Mammary epithelial cell (primary cell): ENCODE measurements at regions of chr9 and their contacts with region 1.

Region 1: DNA sequence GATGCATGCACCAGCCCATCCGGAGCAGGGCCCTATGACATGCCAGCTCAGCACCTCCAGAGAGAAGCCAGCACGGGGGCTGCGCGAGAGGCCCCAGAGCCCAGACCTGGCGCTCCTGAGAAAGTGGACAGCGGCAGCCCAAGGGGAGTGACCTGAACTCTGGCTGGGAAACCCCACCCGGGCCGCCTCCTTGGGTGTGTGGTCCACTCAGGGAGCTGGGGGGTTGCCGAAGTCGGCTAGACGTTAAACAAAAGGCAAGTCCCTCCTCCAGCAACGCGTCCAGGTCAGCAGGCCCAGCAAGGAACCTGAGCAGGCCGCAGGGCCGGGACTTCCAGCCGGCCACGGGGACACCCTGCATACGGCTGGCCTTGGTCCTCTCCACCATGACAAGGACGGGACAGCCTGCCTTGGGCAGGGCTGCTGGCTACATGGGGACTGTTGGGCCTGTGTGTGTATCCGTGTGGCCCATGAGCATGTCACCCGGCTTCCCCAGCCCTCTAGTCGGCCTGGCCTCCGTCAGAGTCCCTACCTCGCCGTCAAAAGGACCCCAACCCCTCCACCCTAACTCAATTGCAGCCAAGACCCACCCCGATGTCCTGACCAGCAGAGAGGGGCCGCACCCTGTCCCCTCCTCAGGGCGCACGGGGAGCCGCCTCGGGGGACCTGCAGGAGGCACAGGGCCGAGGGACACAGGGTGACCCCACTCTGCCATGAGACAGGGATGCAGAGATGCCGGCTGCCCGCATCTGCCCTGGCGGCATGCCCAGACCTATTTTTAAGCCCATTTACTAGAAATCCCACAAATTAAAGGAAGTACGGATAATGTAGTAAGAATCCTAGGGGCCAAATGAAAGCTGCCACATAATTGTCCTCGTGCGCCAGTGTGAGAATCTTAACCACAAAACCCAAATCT is 35.5 kb downstream of the NACC2 start:
- DNase-seq: no peak
- H3K4me3 ChIP-seq: no peak overlapping the region
- H3K27ac ChIP-seq: no peak overlapping the region
- H3K4me1 ChIP-seq: peaks cover 5% of the 10 kb centered on the region
- H3K27me3 ChIP-seq: no peaks in the 10 kb centered on the region
- CTCF ChIP-seq: no peak

Region 2: GRCh38 chr9:135887585-135888050 is 172.0 kb before region 1 on chr9:
- CTCF ChIA-PET with region 1: no interaction called
- dilution Hi-C with region 1: loop called (anchors 5 kb)
- in situ Hi-C with region 1: no loop called
- intact Hi-C with region 1: no loop called
- DNase-seq: no peak
- H3K4me3 ChIP-seq: no peak overlapping the region
- H3K27ac ChIP-seq: no peak overlapping the region
- H3K4me1 ChIP-seq: peaks cover 74% of the 10 kb centered on the region
- H3K27me3 ChIP-seq: no peaks in the 10 kb centered on the region
- CTCF ChIP-seq: no peak

Region 3: DNA sequence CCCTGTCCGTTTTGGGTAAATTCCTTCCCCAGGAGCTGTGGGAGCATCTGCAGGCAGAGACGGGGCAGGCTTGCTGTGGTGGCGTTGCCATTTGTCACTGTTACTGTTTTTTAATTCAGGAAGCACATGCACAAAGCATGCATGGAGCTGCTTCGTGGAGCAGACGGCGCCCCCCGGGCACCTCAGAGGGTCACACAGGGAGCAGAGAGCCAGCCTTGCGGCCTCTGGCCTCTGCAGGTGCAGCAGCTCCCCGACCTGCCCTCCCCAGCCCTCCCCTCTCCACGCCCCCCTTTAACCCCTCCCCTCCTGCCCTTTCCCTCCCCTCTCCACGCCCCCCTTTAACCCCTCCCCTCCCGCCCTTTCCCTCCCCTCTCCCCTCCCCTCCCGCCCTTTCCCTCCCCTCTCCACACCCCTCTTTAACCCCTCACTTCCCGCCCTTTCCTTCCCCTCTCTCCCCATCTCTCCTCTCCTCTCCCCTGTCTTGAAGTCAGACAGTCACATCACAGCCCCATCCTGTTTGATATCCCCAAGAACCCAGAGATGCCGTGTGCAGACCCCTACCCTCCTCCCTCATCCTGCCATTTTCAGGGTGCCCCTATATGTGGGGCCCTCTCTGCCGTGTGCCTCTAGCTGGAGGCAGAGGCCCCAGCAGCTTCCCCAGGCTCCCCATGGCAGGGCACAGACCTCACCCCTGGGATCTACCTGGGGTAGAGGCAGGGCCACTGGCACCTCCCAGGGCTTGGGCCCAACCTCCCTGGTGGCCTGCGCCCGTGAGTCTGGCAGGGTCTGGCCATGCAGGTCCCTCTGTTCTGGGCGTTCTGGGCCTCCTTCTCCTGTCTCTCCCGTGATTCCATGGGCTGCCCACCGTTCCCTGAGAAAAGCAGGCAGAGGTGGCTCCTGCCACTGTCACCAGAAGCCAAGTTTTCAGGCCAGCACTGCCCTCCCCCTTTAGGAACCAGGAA is 68.8 kb before region 1 on chr9:
- CTCF ChIA-PET with region 1: no interaction called
- dilution Hi-C with region 1: no loop called
- in situ Hi-C with region 1: no loop called
- intact Hi-C with region 1: no loop called
- DNase-seq: peak; percentile 27
- H3K4me3 ChIP-seq: no peak overlapping the region
- H3K27ac ChIP-seq: no peak overlapping the region
- H3K4me1 ChIP-seq: peaks cover 18% of the 10 kb centered on the region
- H3K27me3 ChIP-seq: peaks cover 16% of the 10 kb centered on the region
- CTCF ChIP-seq: no peak

Region 4: DNA sequence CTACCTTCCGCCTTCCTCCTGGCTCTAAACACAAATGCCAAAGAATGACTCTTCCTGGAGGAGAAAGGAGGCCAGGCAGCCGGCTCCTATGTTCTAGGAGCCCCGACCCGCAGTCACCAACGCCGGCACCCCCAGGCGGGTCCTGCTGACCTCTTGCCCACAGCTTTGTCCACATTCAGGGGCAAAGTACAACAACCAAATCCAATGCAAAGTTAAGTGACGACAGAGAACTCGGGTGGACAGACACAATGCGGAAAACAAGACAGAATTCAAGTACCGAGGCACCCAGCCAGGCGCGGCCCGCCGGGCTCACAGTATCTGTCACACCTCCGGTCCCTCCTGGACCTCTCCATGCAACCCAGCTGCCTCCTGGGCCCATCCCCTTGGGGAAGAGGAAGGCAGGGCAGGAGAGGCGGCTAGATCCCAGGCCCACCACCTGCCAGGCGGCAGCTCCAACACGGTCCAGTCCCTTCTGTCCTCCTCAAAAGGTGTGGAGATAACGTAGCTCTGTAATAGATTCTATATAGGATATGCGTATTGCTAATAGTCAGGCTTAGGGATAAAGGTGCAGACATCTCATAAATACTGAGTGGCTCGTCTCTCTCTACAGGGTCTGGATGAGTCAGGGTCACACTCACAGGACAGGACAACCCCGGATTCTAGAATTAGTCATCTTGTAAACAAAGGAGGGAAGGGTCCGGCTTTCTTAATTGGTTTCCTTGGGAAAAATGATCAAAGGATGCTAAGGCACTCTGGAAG is 51.5 kb before region 1 on chr9:
- CTCF ChIA-PET with region 1: no interaction called
- dilution Hi-C with region 1: loop called (anchors 5 kb)
- in situ Hi-C with region 1: no loop called
- intact Hi-C with region 1: no loop called
- DNase-seq: peak; percentile 31
- H3K4me3 ChIP-seq: no peak overlapping the region
- H3K27ac ChIP-seq: no peak overlapping the region
- H3K4me1 ChIP-seq: peaks cover 2% of the 10 kb centered on the region
- H3K27me3 ChIP-seq: no peaks in the 10 kb centered on the region
- CTCF ChIP-seq: no peak

Region 5: DNA sequence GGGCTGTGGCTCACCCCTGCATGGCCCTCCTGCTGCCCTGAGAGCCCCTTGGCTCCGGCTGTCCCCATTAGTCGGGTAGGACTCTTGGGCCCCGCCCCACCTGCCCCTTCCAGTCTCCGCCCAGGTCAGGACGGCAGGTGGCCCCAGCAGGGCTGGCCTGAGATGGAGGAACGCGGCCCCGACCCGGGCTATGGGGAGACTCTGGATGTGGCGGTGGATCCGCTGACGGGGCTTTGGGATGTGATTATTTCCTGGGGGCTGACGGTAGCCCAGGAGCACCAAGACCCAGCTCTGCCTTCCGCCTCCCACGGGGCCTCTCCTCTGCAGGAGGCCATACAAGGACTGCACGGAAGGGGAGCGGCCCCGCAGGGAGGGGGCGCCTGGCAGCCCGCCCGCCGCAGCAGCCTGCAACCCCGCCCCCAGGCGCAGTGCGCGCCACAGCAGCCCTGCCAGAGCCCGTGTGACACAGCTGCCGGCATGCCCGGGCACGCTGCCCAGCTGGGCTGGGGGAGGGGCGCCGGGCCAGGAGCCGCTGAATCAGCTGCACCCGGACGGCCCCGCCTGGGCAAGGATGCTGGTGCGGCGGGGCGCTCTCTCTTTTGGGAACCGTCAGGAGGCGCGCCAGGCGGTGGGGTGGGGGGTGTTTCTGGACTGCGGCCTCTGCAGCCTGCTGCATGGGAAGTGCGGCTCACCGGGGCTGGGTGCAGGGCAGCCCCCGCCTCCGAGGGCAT is 49.9 kb after region 1 on chr9:
- CTCF ChIA-PET with region 1: no interaction called
- dilution Hi-C with region 1: loop called (anchors 5 kb)
- in situ Hi-C with region 1: no loop called
- intact Hi-C with region 1: no loop called
- DNase-seq: peak; percentile 90
- H3K4me3 ChIP-seq: peak overlapping the region in 2 of 3 experiments; percentile 6 to 12
- H3K27ac ChIP-seq: no peak overlapping the region
- H3K4me1 ChIP-seq: peaks cover 46% of the 10 kb centered on the region
- H3K27me3 ChIP-seq: no peaks in the 10 kb centered on the region
- CTCF ChIP-seq: peak in 1 of 2 donors; percentile 20

Region 6: DNA sequence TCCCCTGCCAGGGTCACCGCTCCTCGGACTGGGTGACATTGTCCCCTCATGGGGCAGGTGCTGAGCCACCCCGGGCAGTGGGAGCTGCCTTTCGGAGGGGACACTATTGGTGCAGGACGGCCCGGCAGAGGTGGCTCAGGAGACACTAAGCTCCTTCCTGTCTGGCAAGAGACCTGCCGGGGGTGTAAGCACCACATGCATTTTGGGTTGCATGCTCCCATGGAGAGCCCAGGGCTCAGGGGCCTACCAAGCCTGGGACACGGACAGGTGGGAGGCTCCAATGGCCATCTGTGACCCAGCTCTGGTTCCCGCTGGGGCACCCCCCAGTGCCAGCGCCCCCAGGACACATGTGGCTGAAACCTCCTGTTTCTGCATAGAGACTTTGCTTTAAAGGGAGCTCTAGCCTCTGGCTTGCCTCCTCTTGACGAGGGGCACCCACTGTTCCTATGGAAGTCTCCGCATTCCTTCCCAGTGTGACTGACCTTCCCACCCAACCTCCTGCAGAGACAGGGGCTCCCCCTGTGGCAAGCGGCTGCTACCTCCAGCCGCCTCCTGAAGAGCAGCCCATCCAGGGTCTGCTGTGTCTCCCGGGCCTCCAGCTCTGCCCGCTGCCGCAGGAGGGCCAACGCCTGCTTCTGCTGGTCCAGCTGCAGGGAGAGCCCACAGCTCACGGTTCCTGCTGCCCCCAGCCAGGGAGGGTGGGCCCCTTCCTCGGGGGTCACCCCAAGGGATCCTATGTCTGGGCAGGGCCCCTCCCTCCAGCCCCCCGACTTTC is 216.3 kb after region 1 on chr9:
- CTCF ChIA-PET with region 1: no interaction called
- dilution Hi-C with region 1: loop called (anchors 5 kb)
- in situ Hi-C with region 1: no loop called
- intact Hi-C with region 1: no loop called
- DNase-seq: no peak
- H3K4me3 ChIP-seq: no peak overlapping the region
- H3K27ac ChIP-seq: no peak overlapping the region
- H3K4me1 ChIP-seq: peaks cover 11% of the 10 kb centered on the region
- H3K27me3 ChIP-seq: peaks cover 12% of the 10 kb centered on the region
- CTCF ChIP-seq: no peak

Region 7: DNA sequence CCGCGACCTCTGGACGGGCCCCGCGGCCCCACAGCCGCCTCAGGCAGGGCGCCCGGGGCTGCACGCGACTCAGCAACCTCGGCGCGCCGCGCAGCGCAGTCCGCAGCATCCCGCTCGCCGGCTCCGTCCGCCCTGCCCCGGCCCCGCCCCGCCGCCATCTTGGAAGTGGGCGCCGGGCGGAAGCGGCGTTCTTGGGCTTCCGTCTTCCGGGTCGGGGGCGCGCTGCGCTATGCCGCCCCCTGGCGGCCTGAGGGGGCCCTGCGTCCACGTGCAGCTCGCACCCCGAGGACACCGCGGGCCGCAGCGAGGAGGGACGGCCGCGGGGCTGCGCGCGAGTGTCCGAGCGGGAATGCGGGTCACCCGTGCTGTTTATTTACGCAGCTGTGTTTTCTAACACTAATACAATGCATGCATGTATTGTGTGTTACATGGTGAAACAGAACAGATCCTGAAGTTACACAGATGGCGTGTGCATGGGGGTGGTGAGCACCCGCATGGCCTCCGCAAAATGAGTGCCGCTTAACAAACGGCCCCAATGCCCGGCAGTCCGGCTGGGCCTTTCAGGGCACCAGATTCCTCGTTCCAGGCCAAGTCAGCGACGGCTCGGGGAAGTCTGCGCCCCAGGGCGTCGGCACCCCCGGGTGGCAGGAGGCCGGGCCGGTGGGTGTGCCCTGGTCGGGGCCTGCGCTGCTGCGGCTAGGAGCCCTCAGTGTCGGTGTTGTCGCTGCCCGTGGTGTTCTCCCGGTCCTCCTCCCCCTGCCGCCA is 304.2 kb after region 1 on chr9 and contains the start of gene DNLZ:
- CTCF ChIA-PET with region 1: no interaction called
- dilution Hi-C with region 1: no loop called
- in situ Hi-C with region 1: no loop called
- intact Hi-C with region 1: no loop called
- DNase-seq: peak; percentile 73
- H3K4me3 ChIP-seq: peak within 1 kb of the TSS; percentile 58 to 93 (median 72)
- H3K27ac ChIP-seq: no peak within 1 kb of the TSS
- H3K4me1 ChIP-seq: peaks cover 35% of the 10 kb centered on the region
- H3K27me3 ChIP-seq: no peaks in the 10 kb centered on the region
- CTCF ChIP-seq: peak; percentile 73 to 87
- total RNA-seq, gene DNLZ: 11.7 to 33.9 TPM